ENCODE measurements at regions of chr21 and their contacts with region 1.

Region 1: DNA sequence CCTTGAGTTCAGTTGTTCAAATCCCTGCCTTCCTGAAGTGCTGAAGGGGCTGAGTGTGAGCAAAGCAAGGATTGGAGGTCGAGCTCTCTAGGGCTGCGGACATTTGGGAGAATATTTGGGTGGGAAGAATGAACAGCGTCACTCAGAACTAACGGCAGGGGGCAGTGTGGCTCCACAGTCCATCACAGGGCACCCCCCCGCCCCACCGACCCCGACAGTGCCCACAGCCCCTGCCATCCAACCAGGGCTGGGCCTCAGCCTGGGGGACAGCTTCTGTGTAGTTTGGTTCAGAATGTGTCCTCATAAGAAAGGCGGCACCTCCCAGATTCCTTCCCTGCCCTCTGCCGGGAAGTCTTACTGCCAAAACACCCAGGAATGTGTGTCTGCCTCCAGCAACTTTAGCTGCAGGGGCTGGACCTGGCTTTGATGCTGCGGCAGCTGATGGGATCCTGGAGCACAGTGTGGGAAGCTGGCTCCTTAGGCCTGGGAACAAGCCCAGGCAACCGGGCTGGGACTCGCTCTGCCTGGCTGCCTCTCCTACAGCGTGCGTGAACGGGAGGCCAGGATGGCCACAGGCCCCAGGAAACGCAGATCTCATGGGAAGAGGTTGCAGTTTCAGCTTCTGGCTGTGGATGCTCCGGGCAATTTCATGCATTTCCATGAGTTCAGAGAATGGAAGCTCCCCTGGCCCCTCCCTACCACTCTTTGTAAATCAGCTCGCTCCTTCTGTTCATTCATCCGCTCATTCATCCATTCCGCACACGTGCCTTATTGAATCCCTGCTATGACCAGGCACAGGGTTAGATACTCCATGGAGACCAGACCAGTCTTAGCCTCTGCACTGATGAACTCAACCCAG is 104.9 kb upstream of the TMPRSS2 start:
- DNase-seq: peak; percentile 35
- H3K4me3 Mint-ChIP-seq: no peak overlapping the region
- H3K27ac Mint-ChIP-seq: no peak overlapping the region
- H3K4me1 Mint-ChIP-seq: no peaks in the 10 kb centered on the region
- H3K27me3 Mint-ChIP-seq: peaks cover 25% of the 10 kb centered on the region

Region 2: GRCh38 chr21:41396506-41397075 is 216.3 kb before region 1 on chr21:
- CTCF ChIA-PET with region 1: no interaction called
- intact Hi-C with region 1: no loop called
- DNase-seq: no peak
- H3K4me3 Mint-ChIP-seq: no peak overlapping the region
- H3K27ac Mint-ChIP-seq: no peak overlapping the region
- H3K4me1 Mint-ChIP-seq: no peaks in the 10 kb centered on the region
- H3K27me3 Mint-ChIP-seq: no peaks in the 10 kb centered on the region

Region 3: DNA sequence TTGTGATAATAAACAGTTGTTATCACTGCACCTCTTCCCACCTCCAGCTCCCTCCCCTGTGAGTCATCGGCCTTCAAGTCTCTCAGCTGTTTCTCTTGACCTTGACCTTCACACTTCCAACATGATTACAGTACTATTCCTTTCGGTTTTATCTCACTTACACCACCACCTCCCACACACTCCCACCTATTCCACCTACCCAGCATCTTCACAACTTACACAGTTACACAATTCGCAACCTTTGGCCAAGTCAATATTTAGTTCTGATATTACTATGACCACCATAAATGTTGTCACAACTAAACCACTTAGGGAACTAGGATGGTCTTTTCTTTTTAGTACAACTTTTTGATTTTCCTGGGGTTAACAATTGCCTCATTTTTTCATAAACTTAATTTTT is 93.8 kb after region 1 on chr21:
- CTCF ChIA-PET with region 1: no interaction called
- intact Hi-C with region 1: no loop called
- DNase-seq: no peak
- H3K4me3 Mint-ChIP-seq: no peak overlapping the region
- H3K27ac Mint-ChIP-seq: no peak overlapping the region
- H3K4me1 Mint-ChIP-seq: no peaks in the 10 kb centered on the region
- H3K27me3 Mint-ChIP-seq: peaks cover 18% of the 10 kb centered on the region

Region 4: GRCh38 chr21:41777951-41778874 is 165.3 kb after region 1 on chr21:
- CTCF ChIA-PET with region 1: interaction called, 8 read pairs
- intact Hi-C with region 1: loop called (anchors 2 kb)
- DNase-seq: peak; percentile 60
- H3K4me3 Mint-ChIP-seq: no peak overlapping the region
- H3K27ac Mint-ChIP-seq: no peak overlapping the region
- H3K4me1 Mint-ChIP-seq: no peaks in the 10 kb centered on the region
- H3K27me3 Mint-ChIP-seq: peaks cover 57% of the 10 kb centered on the region

Region 5: DNA sequence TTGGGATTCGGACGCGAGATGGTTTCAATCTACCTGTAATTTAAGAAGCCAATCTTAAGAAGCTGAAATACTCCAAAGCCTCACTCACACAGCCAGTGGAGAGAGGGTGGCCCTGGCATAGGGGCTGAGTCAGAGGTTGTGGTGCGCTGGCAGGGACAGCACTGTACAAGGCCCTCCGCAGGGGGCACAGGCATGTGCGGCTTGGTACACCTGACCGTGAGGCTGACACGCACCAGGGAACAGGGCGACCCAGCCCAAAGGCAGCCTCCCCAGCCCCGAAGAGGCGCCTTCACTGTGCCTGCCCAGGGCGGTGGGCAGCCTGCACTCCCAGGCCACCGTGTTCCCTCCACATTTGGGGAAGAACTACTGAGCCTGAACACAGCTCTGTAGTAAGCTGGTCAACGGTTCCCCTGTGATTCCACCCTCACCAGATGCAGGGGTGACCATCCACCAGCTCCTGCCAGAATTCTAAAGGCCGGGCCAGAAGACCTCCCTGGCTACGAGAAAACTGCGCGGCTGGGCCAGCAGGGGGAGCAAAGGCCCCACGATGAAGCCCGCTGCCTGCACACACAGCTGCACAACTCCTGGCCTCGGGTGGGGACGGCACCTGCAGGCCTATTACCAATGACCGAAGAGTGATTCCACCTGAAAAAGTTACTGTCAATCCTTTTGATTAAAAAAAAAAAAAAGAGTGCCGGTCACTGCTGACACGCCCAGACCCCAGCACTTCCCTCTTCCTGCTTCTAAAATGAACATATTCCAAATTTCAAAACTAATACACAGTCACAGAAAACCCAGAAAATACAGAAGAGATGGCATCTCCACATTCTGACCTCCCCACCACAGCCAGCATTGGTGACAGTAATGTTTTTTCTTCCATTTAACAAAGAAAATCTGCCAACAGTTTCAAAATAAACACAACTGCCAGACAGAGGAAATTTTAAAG is 203.6 kb after region 1 on chr21:
- CTCF ChIA-PET with region 1: interaction called, 3 read pairs
- intact Hi-C with region 1: loop called (anchors 1 kb)
- DNase-seq: peak; percentile 68
- H3K4me3 Mint-ChIP-seq: no peak overlapping the region
- H3K27ac Mint-ChIP-seq: no peak overlapping the region
- H3K4me1 Mint-ChIP-seq: peaks cover 10% of the 10 kb centered on the region
- H3K27me3 Mint-ChIP-seq: no peaks in the 10 kb centered on the region